Kidney (tissue), 22 donors: ENCODE measurements at regions of chr1 and their contacts with region 1.

Region 1: DNA sequence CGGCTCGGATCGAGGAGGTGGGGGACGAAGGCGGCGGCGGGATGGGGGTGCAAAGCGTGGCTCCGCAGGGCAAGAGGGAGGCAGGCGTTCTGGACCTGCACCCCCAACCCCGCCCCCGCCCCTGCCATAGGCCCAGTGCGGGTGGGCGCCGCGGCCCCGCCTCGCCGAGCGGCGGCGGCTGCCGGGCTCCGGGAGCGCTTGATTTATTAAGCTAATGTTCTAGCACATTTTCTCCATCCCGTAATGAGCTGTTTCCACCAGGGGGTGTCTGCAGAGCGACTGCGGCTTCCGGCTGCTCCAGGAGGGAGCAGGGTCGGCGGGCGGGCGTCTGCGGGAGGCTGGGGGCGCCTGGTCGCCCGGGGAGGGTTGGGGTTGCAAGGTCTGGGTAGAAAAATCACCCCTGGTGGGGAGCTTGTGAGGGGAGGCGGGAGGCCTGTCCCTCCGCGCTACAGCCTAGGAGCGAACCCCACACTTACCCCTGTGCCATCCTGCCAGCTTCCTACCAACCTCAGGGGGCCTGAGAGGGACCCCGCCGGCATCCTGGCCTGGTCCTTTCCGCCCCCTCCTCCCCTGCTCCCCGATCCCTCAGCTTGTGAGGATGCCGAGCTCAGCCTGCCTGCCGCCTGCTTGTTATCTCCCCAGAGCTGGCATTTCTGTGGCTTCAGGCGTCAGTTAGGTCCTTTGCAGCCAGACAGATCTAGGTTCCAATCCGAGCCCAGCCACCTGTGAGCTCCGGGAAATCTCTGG is 48.5 kb upstream of the ACOT11 start:
- DNase-seq: peak; percentile 80 to 92 (median 86)
- H3K4me3 ChIP-seq: peak overlapping the region in 1 of 3 donors; percentile 36
- H3K27ac ChIP-seq: no peak overlapping the region
- H3K4me1 ChIP-seq: peaks cover 0 to 3% (median 0%) of the 10 kb centered on the region in 3 donors
- H3K27me3 ChIP-seq: no peaks in the 10 kb centered on the region
- CTCF ChIP-seq: peak; percentile 33

Region 2: GRCh38 chr1:54070171-54070837 is 429.2 kb before region 1 on chr1:
- intact Hi-C with region 1: loop called (anchors 10 kb)
- DNase-seq: peak in 2 of 5 donors; percentile 67 to 83
- H3K4me3 ChIP-seq: no peak overlapping the region
- H3K27ac ChIP-seq: no peak overlapping the region
- H3K4me1 ChIP-seq: no peaks in the 10 kb centered on the region
- H3K27me3 ChIP-seq: no peaks in the 10 kb centered on the region
- CTCF ChIP-seq: peak; percentile 71

Region 3: DNA sequence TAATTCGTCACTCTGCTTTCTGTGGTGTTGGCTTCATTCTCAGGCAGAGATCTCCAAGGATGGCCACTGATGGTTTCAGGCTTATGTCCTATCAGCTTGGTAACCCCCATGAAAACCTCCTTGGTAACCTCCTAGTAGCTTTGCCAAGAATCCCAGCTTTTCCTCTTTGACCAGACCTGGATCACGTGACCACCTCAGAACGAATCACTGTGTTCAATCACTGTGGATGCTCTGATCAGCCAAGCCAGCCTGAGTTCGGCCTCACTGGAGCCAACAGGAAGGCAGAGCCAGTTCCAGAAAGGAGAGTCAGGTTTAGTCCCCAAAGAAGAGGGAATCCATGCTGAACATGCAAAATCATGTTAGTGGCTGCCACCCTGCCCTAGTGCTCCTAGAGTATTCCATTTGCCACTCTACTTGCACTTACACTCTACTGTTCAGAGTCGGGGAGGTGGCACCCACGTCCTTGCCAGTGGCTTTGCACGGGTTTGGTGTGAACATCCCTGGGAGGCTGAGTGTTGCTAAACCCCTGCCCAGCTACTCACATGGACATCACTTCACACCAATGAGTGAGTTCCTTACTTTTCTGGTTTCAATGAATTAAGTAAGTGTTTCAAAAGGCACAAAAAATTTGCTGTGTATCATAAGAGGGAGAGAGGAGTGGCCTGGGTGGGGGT is 59.8 kb before region 1 on chr1:
- intact Hi-C with region 1: no loop called
- DNase-seq: peak in 1 of 5 donors; percentile 13
- H3K4me3 ChIP-seq: no peak overlapping the region
- H3K27ac ChIP-seq: no peak overlapping the region
- H3K4me1 ChIP-seq: no peaks in the 10 kb centered on the region
- H3K27me3 ChIP-seq: no peaks in the 10 kb centered on the region
- CTCF ChIP-seq: no peak